H1 (cell line): ENCODE measurements at regions of chr16 and their contacts with region 1.

Region 1: DNA sequence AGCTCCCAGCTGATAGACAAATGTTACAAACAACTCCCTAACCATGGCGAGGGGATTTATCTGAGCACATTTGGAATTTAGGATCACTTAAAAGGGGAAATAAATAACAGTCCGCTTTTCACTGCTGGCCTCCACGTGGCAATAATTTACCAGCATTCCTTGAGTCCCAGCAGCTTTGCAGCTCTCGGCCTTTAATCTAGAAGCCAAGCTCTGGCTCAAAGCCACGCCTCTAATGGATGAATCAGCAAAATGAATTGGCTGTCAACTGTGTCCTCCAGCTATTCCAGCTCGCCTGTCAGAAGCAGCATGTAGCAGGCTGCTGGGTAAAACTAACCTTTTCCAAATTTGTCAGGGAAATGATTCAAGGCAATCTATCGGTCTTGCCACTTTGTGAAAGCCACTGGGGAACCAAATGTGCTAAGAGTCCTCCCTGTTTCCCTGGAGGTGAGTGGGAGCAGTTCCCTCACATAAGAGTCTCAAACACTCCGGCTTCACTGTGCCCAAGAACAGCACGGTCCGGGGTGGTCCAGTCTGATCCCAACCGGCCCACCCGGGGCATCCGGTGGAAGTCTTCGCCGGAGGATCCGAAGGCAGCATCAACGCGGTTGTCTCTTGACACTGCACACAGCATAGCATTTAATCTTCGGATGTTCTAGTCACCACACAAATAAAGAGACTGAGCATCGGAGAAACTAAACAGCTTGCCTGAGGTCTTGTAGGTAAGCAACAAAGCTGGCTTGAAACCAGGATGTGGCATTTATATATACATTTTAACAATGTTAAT is 143.3 kb downstream of the PARN start:
- DNase-seq: no peak
- H3K4me3 ChIP-seq: no peak overlapping the region
- H3K27ac ChIP-seq: no peak overlapping the region
- H3K4me1 ChIP-seq: peaks cover 1 to 20% (median 14%) of the 10 kb centered on the region in 4 experiments; a peak in 6 of 7 replicates
- H3K27me3 ChIP-seq: no peaks in the 10 kb centered on the region
- CTCF ChIP-seq: no peak
- EP300 ChIP-seq: no peak
- POLR2A ChIP-seq: no peak
- RAD21 ChIP-seq: no peak

Region 2: DNA sequence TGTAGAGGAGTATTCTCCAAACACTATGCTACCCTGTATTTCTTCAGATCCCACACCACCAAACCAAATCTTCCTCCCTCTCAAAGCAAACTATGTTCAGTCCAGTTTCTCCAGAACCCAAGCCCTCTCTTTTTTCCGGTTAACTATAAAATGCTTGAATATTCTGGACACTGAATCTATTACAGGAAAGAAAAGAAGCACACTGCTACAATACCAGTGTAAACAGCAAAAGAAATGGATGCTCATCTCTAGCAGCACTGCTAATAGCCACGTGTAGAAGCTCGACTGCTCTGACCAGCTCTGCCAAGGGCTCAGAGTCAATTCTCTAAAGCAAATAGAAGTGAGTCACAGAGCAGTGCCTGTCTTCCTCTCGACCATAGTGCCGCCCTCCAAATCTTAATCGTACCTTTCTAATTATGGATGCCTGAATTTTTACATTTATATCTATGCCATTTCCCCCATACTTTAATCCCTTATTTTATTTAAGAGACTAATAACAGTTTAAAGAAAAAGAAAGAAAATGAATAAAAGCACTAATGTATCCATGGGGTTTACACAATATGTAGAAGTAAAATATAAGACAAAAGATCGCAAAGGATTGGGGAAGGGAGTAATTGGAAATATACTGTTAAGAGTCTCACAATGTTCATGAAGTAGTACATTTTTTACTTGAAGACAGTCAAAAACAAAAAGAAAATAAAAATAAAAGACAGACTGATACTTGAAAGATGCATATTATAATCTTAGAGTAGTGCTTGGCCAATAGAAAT is 11.2 kb before region 1 on chr16:
- CTCF ChIA-PET with region 1: interaction called, 12 read pairs
- POLR2A ChIA-PET with region 1: no interaction called
- DNase-seq: no peak
- H3K4me3 ChIP-seq: no peak overlapping the region
- H3K27ac ChIP-seq: no peak overlapping the region
- H3K4me1 ChIP-seq: no peaks in the 10 kb centered on the region
- H3K27me3 ChIP-seq: no peaks in the 10 kb centered on the region
- CTCF ChIP-seq: no peak
- EP300 ChIP-seq: no peak
- POLR2A ChIP-seq: no peak
- RAD21 ChIP-seq: no peak

Region 3: DNA sequence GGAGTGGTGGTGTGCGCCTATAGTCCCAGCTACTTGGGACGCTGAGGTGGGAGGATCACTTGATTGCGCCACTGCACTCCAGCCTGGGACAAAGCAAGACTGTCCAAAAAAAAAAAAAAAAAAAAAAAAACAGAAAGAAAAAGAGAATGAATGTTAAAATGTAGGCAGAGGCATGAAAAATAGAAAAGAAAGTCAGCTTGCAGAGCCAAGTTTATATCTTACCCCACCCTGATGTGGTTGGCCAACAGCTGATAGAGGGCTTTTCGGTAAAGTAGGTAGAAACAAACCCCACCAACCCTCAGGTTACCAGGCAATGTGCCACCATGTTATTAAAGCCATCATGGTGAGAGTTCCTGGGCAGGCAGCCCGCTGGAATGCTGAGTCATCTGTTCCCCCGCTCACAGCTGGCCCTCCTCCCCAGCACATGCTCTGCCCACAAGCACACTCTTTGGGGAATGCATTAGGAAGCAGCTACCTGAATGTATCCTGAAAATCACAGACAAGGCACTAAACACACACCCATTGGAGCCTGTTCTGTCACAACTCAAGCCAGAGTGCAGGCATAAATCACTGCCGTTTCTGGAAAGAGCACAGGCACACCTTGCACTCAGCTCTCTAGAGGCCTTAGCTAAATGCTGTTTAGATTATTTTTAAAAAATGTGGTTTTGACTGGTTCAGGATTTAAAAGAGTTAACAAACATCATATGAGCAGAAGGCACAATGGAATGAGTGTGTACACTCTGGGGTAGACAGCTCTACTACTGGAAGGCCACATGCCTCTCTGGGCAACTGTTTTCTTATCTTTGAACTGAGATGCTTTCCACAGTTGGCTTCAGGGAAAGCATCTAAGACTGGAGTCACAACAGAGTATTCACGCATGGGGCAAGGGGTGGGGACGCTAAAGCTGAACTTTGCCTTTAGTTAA is 14.9 kb after region 1 on chr16:
- CTCF ChIA-PET with region 1: interaction called, 28 read pairs
- POLR2A ChIA-PET with region 1: interaction called, 10 read pairs
- DNase-seq: peak; percentile 51 to 59
- H3K4me3 ChIP-seq: 0 out of 8 replicates have a peak overlapping the region, but pooled peaks of 1 of the 4 experiments have one; percentile 7
- H3K27ac ChIP-seq: no peak overlapping the region
- H3K4me1 ChIP-seq: peaks cover 12 to 34% (median 16%) of the 10 kb centered on the region in 4 experiments
- H3K27me3 ChIP-seq: no peaks in the 10 kb centered on the region
- CTCF ChIP-seq: no peak
- EP300 ChIP-seq: 0 out of 3 replicates have a peak, but pooled peaks of 1 of the 2 experiments have one; percentile 29
- POLR2A ChIP-seq: 0 out of 3 replicates have a peak, but pooled peaks of 1 of the 2 experiments have one; percentile 31
- RAD21 ChIP-seq: no peak

Region 4: DNA sequence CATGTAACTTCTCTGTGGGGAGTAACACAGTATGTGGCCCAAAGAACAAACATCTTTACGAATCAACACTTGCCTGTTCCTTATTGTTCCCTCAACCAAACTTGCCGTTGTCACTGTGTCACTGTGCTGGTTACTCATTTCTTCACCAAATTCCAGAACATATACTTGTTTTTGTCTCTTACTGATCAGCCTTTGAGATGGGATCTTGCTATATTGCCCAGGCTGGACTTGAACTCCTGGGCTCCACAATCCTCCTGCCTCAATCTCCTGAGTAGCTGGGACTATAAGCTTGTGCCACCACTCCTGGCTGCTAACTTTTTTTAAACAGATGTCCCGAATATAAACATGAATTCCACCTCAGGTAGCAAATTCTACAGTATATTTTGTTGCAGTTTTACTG is 28.3 kb after region 1 on chr16:
- CTCF ChIA-PET with region 1: interaction called, 10 read pairs
- POLR2A ChIA-PET with region 1: interaction called, 3 read pairs
- DNase-seq: no peak
- H3K4me3 ChIP-seq: no peak overlapping the region
- H3K27ac ChIP-seq: no peak overlapping the region
- H3K4me1 ChIP-seq: peaks cover 0 to 4% (median 3%) of the 10 kb centered on the region in 4 experiments; a peak in 4 of 7 replicates
- H3K27me3 ChIP-seq: no peaks in the 10 kb centered on the region
- CTCF ChIP-seq: no peak
- EP300 ChIP-seq: no peak
- POLR2A ChIP-seq: no peak
- RAD21 ChIP-seq: no peak